ENCODE measurements at regions of chr1 and their contacts with region 1.

Region 1: DNA sequence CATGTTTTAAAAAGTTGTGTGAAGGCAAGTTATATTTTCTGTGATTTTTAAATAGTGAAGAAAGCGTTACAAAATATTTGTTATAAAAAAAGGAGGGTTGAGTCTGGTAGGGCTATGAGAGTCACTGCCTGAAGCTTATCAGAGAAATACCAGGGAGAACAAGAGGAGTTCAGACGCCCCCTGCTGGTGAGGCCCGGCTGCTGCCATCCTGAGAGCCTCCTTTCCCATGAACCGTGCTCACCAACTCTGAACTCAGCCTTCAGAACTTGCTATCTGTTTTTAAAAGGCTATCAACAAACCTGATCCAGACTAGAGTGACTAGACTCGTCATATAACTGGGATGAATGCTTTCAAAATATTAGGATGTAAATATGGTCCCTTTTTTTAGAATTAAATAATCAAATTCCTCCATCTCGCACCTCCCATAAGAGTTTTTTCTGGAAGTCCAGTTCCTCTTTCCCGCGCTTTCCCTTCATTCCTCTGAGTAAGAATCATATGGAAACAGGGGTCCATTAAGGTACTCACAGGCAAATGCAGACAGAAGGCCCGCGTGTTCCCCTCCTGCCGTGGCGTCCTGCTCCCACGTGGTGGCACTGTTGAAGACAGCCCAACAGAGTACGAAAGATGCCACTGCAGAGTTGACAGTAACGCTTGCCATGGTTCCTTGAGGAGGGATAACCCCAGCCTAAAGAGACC is 26.2 kb upstream of the SPATA6 start:
- DNase-seq: peak; percentile 89
- H3K4me3 ChIP-seq: no peak overlapping the region
- H3K27ac ChIP-seq: no peak overlapping the region
- H3K4me1 ChIP-seq: peaks cover 0 to 16% (median 14%) of the 10 kb centered on the region in 4 donors
- H3K27me3 ChIP-seq: no peaks in the 10 kb centered on the region
- CTCF ChIP-seq: peak; percentile 71 to 97 (median 82)
- EP300 ChIP-seq: no peak
- POLR2A ChIP-seq: no peak

Region 2: GRCh38 chr1:48055876-48056764 is 442.1 kb before region 1 on chr1:
- intact Hi-C with region 1: no loop called
- DNase-seq: no peak
- H3K4me3 ChIP-seq: no peak overlapping the region
- H3K27ac ChIP-seq: no peak overlapping the region
- H3K4me1 ChIP-seq: peaks cover 0 to 9% (median 8%) of the 10 kb centered on the region in 4 donors
- H3K27me3 ChIP-seq: no peaks in the 10 kb centered on the region
- CTCF ChIP-seq: no peak
- EP300 ChIP-seq: no peak
- POLR2A ChIP-seq: no peak

Region 3: GRCh38 chr1:48109390-48110013 is 388.7 kb before region 1 on chr1:
- intact Hi-C with region 1: loop called (anchors 5 kb)
- DNase-seq: no peak
- H3K4me3 ChIP-seq: no peak overlapping the region
- H3K27ac ChIP-seq: no peak overlapping the region
- H3K4me1 ChIP-seq: no peaks in the 10 kb centered on the region
- H3K27me3 ChIP-seq: no peaks in the 10 kb centered on the region
- CTCF ChIP-seq: peak; percentile 15 to 76 (median 63)
- EP300 ChIP-seq: no peak
- POLR2A ChIP-seq: no peak

Region 4: GRCh38 chr1:48227165-48228013 is 270.9 kb before region 1 on chr1:
- intact Hi-C with region 1: no loop called
- DNase-seq: no peak
- H3K4me3 ChIP-seq: no peak overlapping the region
- H3K27ac ChIP-seq: no peak overlapping the region
- H3K4me1 ChIP-seq: no peaks in the 10 kb centered on the region
- H3K27me3 ChIP-seq: peaks cover 0 to 14% (median 3%) of the 10 kb centered on the region in 3 donors
- CTCF ChIP-seq: no peak
- EP300 ChIP-seq: no peak
- POLR2A ChIP-seq: no peak

Region 5: DNA sequence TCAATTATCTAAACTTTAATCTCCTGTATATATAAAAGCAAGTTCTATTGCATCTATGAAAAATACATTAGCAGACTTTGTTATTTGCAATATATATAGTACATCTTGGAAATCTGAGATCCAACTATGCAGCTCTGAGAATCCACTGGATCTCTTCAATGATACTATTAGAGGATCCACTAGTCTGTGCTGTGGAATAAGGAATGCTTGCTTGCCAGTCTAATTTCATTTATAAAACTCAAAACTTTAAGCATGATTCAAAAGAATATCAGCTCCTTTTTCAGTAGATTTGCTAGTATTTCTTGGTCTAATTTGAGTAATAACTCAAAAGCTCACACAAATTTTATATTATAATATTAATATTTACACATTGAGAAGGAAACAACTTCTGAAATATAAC is 141.3 kb before region 1 on chr1:
- intact Hi-C with region 1: loop called (anchors 5 kb)
- DNase-seq: no peak
- H3K4me3 ChIP-seq: no peak overlapping the region
- H3K27ac ChIP-seq: no peak overlapping the region
- H3K4me1 ChIP-seq: no peaks in the 10 kb centered on the region
- H3K27me3 ChIP-seq: no peaks in the 10 kb centered on the region
- CTCF ChIP-seq: no peak
- EP300 ChIP-seq: no peak
- POLR2A ChIP-seq: no peak

Region 6: DNA sequence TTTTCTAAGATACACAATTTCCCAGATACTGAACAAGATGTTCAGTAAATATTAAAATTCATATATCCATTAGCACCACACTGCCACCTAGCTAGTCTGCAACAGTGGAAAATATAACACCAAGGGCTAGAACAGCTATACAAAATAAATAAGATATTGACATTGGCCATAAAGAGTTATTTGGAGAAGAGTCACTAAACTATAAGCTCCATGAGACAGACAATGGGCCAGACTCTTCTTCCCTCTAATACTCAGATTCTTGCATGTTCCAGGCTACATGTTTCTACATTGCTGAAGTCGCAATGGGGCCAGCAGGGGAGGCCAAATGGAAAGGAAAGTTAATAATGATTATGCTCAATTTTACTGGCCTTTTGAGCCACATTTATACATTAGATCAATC is 47.7 kb before region 1 on chr1:
- intact Hi-C with region 1: loop called (anchors 5 kb)
- DNase-seq: no peak
- H3K4me3 ChIP-seq: no peak overlapping the region
- H3K27ac ChIP-seq: no peak overlapping the region
- H3K4me1 ChIP-seq: no peaks in the 10 kb centered on the region
- H3K27me3 ChIP-seq: no peaks in the 10 kb centered on the region
- CTCF ChIP-seq: no peak
- EP300 ChIP-seq: no peak
- POLR2A ChIP-seq: no peak